ENCODE measurements at regions of chr10 and their contacts with region 1.

Region 1: GRCh38 chr10:28432210-28432676 is 100.7 kb upstream of the WAC start:
- DNase-seq: peak in 7 of 9 experiments; percentile 1 to 64 (median 18)
- ATAC-seq: peak; percentile 51
- H3K4me3 ChIP-seq: peak overlapping the region; percentile 17 to 46
- H3K4me3 Mint-ChIP-seq: peak overlapping the region; percentile 68
- H3K27ac ChIP-seq: no peak overlapping the region
- H3K27ac Mint-ChIP-seq: no peak overlapping the region
- H3K4me1 ChIP-seq: no peaks in the 10 kb centered on the region
- H3K4me1 Mint-ChIP-seq: peaks cover 8% of the 10 kb centered on the region
- H3K27me3 ChIP-seq: peaks cover 0 to 1% of the 10 kb centered on the region in 2 experiments
- H3K27me3 Mint-ChIP-seq: peaks cover 11% of the 10 kb centered on the region
- CTCF ChIP-seq: peak; percentile 86

Region 2: DNA sequence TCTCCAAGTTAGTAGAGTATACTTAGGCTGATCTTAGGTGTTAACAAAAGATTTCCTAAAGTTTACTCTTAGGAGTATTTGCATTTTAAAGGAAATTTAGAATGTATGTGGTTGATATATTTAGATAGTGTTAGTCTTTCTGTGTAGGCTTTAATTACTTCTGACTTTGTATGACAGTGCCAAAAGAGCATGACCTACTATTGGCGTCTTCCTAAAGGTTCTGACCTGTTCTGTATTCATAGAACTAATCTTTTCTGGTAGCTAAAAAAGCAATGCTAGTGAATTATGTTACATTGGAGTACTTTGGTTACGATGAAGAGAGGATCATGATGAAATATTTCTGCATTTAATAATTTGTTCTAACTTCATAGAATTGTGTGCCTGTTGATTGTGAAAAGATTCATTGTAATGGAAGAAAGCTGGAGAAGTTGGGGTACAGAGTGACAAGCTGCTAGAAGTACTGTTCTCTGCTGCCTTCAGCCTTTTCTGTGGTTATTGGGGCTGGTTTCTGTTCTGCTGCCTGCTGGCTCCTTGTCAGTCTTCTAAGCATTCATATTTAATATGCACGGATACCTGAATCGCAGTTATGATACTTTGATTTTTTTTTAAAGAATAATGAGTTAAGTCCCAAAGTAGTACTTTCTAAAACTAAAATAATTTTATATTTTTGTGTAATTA is 113.9 kb after region 1 on chr10:
- CTCF ChIA-PET with region 1: no interaction called
- POLR2A ChIA-PET with region 1: no interaction called
- intact Hi-C with region 1: loop called in 1 of 2 experiments (anchors 5 kb)
- DNase-seq: peak in 2 of 9 experiments; percentile 16 to 37
- ATAC-seq: peak; percentile 49
- H3K4me3 ChIP-seq: no peak overlapping the region
- H3K4me3 Mint-ChIP-seq: peak overlapping the region; percentile 5
- H3K27ac ChIP-seq: no peak overlapping the region
- H3K27ac Mint-ChIP-seq: peak overlapping the region; percentile 2
- H3K4me1 ChIP-seq: peaks cover 49% of the 10 kb centered on the region
- H3K4me1 Mint-ChIP-seq: peaks cover 79% of the 10 kb centered on the region
- H3K27me3 ChIP-seq: no peaks in the 10 kb centered on the region
- H3K27me3 Mint-ChIP-seq: no peaks in the 10 kb centered on the region
- CTCF ChIP-seq: no peak

Region 3: GRCh38 chr10:28587970-28588290 is 155.7 kb after region 1 on chr10:
- CTCF ChIA-PET with region 1: interaction called, 3 read pairs
- POLR2A ChIA-PET with region 1: no interaction called
- intact Hi-C with region 1: loop called (anchors 5 kb)
- DNase-seq: no peak
- ATAC-seq: no peak
- H3K4me3 ChIP-seq: no peak overlapping the region
- H3K4me3 Mint-ChIP-seq: no peak overlapping the region
- H3K27ac ChIP-seq: no peak overlapping the region
- H3K27ac Mint-ChIP-seq: no peak overlapping the region
- H3K4me1 ChIP-seq: peaks cover 2% of the 10 kb centered on the region
- H3K4me1 Mint-ChIP-seq: peaks cover 44% of the 10 kb centered on the region
- H3K27me3 ChIP-seq: no peaks in the 10 kb centered on the region
- H3K27me3 Mint-ChIP-seq: no peaks in the 10 kb centered on the region
- CTCF ChIP-seq: no peak

Region 4: DNA sequence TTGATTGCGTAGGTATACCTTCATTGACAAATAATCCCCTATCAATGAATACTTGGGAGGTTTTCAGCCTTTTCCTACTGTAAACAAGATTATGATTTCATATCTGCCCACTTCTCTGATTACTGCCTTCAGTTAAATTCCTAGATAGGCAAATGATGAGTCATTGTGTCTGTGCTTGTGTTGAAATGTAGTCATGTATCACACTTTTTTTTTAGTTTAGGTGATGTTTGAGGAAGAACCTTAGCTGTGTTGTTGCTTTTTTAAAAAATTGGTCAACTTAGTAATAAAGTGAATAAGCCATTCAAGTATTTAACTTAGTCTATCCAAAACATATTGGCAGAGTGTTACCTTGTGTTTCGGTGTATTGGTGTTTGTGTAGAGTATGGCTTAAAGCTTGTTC is 160.7 kb after region 1 on chr10:
- CTCF ChIA-PET with region 1: interaction called, 3 read pairs
- POLR2A ChIA-PET with region 1: no interaction called
- intact Hi-C with region 1: loop called (anchors 5 kb)
- DNase-seq: no peak
- ATAC-seq: no peak
- H3K4me3 ChIP-seq: no peak overlapping the region
- H3K4me3 Mint-ChIP-seq: no peak overlapping the region
- H3K27ac ChIP-seq: no peak overlapping the region
- H3K27ac Mint-ChIP-seq: peak overlapping the region; percentile 6
- H3K4me1 ChIP-seq: peaks cover 23% of the 10 kb centered on the region
- H3K4me1 Mint-ChIP-seq: peaks cover 58% of the 10 kb centered on the region
- H3K27me3 ChIP-seq: no peaks in the 10 kb centered on the region
- H3K27me3 Mint-ChIP-seq: no peaks in the 10 kb centered on the region
- CTCF ChIP-seq: no peak

Region 5: DNA sequence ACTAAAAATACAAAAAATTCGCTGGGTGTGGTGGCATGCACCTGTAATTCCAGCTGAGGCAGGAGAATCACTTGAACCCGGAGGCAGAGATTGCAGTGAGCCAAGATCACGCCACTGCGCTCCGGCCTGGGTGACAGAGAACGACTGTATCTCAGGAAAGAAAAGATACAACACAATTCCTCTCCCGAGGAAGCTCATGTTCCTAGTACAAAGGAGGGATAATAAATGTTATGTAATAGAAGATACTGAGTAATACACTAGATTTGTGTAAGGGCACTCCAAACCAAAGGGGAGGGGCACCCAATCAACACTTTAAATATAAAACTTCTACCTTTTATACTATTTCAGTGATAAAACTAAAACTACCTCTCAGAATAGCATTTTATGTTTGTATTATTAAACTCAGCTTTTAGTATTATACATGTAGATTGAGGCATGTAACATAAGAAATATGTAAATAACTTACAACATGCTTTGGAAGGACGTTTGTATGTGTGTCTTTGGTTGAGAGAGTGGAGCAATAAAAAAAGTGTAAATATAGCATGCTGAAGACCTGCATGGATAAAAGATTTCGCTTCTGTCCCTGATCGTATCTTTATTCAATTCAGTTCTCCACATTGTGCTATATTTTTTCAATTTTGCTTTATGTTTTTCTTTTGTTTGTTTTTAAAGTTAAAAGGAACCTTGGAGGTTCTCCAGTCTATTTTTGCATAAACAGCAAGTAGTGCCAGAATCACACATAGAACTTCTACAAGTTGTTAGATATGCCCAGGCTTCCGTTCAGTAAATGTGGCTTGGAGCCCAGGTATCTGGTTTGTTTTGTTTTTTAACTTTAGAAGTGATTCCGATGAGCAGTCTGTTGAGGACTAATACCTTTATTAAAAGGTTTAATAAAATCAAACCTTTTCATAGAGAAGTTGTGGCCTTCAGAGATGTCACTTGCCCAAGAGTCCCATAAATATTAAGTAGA is 172.6 kb after region 1 on chr10:
- CTCF ChIA-PET with region 1: interaction called, 3 read pairs
- POLR2A ChIA-PET with region 1: no interaction called
- intact Hi-C with region 1: loop called in 1 of 2 experiments (anchors 5 kb)
- DNase-seq: no peak
- ATAC-seq: no peak
- H3K4me3 ChIP-seq: no peak overlapping the region
- H3K4me3 Mint-ChIP-seq: no peak overlapping the region
- H3K27ac ChIP-seq: no peak overlapping the region
- H3K27ac Mint-ChIP-seq: peak overlapping the region; percentile 20
- H3K4me1 ChIP-seq: peaks cover 33% of the 10 kb centered on the region
- H3K4me1 Mint-ChIP-seq: peaks cover 52% of the 10 kb centered on the region
- H3K27me3 ChIP-seq: no peaks in the 10 kb centered on the region
- H3K27me3 Mint-ChIP-seq: no peaks in the 10 kb centered on the region
- CTCF ChIP-seq: no peak

Region 6: DNA sequence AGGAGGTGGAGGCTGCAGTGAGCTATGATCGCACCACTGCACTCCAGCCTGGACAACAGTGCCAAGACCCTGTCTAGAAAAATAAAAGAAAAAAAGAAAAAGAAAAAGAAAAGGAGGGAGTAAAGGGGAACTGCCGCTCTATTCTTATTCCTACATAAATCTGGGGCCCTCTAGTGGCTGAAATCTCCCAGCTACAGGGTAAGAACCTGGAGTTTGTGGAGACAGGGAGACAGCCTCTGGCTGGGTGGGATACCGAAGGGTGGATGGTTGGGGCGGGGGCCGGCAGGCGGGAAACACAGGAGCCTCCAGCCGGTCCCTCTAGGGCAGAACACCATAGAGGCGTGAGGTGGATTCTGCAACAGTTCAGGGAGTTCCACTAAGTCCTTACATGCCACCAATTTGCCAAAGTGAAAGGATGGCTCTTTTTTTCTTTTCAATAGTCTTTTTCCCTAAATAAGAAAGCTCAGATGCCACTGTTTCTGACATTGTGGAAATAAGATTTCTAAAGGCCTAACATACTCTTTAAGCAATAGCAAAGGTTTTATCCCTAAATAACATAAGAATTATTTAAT is 1085.2 kb after region 1 on chr10:
- CTCF ChIA-PET with region 1: no interaction called
- POLR2A ChIA-PET with region 1: no interaction called
- intact Hi-C with region 1: no loop called
- DNase-seq: no peak
- ATAC-seq: no peak
- H3K4me3 ChIP-seq: no peak overlapping the region
- H3K4me3 Mint-ChIP-seq: no peak overlapping the region
- H3K27ac ChIP-seq: no peak overlapping the region
- H3K27ac Mint-ChIP-seq: no peak overlapping the region
- H3K4me1 ChIP-seq: no peaks in the 10 kb centered on the region
- H3K4me1 Mint-ChIP-seq: no peaks in the 10 kb centered on the region
- H3K27me3 ChIP-seq: no peaks in the 10 kb centered on the region
- H3K27me3 Mint-ChIP-seq: no peaks in the 10 kb centered on the region
- CTCF ChIP-seq: no peak